ENCODE measurements at regions of chr19 and their contacts with region 1.

Region 1: DNA sequence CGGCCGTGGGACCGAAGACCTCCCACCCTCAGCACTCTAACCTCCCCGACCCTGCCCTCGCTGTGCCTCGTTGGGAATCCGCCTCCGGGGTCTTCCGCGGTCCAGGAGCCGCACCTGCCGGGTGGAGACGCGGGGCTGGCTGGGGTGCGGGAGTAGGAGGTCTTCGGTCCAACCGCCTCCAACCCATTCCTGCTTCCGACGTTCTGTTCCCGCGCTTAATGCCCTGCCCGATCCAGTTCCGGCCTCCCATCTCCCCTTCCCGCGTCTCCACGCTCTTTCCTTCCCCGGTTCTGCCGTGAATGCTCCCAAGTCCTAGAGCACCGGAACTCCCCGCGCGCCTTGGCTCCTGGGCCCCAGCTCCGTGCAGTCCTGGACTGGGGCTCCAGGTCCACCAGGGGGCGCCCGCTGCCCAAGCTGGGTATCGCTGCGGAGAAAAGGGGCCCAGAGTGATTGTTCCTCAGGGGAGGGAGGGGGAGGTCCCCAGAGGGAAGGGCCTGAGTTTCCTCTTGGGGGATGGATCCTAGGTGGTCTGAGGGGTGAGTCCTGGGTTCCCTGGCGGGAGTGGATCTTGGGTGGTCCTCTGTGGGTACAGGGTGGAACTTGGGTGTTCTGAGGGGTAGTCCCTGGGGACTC is 14.1 kb upstream of the TNFSF9 start:
- DNase-seq: peak; percentile 92
- H3K4me3 ChIP-seq: peak overlapping the region; percentile 44 to 63 (median 62)
- H3K27ac ChIP-seq: peak overlapping the region; percentile 71 to 85 (median 78)
- H3K4me1 ChIP-seq: peaks cover 0 to 14% (median 10%) of the 10 kb centered on the region in 4 donors
- H3K27me3 ChIP-seq: no peaks in the 10 kb centered on the region
- CTCF ChIP-seq: peak; percentile 89 to 96 (median 92)
- EP300 ChIP-seq: no peak
- POLR2A ChIP-seq: no peak

Region 2: GRCh38 chr19:6423499-6424194 is 93.1 kb before region 1 on chr19:
- intact Hi-C with region 1: no loop called
- DNase-seq: peak; percentile 67
- H3K4me3 ChIP-seq: peak overlapping the region; percentile 71 to 85 (median 84)
- H3K27ac ChIP-seq: peak overlapping the region; percentile 52 to 86 (median 82)
- H3K4me1 ChIP-seq: peaks cover 4 to 38% (median 30%) of the 10 kb centered on the region in 4 donors
- H3K27me3 ChIP-seq: no peaks in the 10 kb centered on the region
- CTCF ChIP-seq: no peak
- EP300 ChIP-seq: no peak
- POLR2A ChIP-seq: no peak

Region 3: DNA sequence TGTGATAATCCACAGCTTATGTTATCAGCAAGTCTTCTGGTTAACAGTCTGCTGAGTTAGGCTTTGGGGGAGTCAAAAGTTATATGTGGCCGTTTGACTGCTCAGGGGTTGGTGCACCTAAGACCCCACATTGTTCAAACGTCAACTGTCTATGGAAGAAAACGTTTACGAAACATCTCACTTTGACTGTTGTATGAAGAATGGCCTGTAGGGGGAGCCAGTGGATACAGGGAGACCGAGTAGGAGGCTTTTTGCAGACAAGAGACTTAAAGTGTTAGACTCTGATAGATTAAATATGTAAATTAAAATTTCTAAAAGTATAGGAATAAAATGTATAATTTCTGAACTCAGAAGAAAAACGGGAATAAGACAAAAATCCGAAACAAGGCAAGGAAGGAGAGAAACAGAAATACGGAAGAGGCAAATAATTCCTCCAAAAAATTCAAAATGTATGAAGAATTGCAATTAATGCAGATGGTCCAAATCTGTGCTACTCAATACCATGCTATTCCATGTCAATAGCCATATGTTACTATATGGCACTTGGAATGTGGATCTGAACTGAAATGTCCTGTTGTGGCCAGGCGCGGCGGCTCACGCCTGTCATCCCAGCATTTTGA is 115.3 kb after region 1 on chr19:
- intact Hi-C with region 1: loop called (anchors 2 kb)
- DNase-seq: peak; percentile 82
- H3K4me3 ChIP-seq: no peak overlapping the region
- H3K27ac ChIP-seq: no peak overlapping the region
- H3K4me1 ChIP-seq: no peaks in the 10 kb centered on the region
- H3K27me3 ChIP-seq: peaks cover 0 to 7% (median 0%) of the 10 kb centered on the region in 3 donors
- CTCF ChIP-seq: peak; percentile 58 to 87 (median 74)
- EP300 ChIP-seq: no peak
- POLR2A ChIP-seq: no peak

Measured in sigmoid colon (tissue), 7 donors.